Prostate gland (tissue), 2 donors: ENCODE measurements at regions of chr10 and their contacts with region 1.

Region 1: DNA sequence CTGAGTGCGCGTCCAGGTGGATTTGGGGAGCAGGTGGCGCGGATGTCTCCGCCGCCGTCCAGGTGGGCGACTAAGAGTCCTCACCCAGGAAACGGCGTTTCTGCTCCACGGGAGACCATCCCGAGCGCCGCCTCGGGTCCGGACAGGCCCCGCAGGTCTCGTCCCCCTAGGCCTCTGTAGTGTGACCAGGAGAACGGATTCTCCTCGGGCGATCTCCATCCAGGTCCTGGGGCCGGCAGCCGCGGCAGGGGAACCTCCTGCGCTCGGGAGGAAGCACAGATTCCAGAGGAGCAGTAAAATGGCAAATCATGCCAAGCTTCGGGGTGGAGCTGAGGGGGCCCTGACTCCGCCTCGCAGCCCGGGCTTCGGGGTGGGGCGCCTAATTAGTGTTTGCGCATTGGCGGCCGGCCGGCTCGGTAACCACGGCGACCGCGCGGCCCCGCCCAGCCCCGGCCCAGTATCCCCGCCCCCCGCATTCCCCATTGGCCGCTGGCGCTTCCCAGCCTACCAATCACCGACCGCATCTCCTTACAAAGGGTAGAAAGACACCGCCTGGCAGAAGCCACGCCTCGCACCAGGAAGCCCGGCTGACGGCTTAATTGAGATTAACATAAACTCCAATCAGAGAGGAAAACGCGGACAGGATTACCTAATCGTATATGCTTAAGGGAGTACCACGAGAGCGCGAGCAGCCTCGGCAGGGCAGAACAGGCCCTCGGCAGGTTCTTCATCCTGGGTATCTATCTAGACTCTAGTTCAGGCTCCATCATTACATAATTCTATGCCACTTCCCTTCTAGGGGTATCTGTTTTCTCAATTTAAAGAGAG is 168.6 kb downstream of the ARHGAP12 start:
- DNase-seq: peak; percentile 97
- H3K4me3 ChIP-seq: peak overlapping the region; percentile 56 to 80
- H3K27ac ChIP-seq: peak overlapping the region; percentile 91 to 92
- H3K4me1 ChIP-seq: peaks cover 2% of the 10 kb centered on the region
- H3K27me3 ChIP-seq: no peaks in the 10 kb centered on the region
- CTCF ChIP-seq: no peak
- POLR2A ChIP-seq: peak; percentile 91

Region 2: DNA sequence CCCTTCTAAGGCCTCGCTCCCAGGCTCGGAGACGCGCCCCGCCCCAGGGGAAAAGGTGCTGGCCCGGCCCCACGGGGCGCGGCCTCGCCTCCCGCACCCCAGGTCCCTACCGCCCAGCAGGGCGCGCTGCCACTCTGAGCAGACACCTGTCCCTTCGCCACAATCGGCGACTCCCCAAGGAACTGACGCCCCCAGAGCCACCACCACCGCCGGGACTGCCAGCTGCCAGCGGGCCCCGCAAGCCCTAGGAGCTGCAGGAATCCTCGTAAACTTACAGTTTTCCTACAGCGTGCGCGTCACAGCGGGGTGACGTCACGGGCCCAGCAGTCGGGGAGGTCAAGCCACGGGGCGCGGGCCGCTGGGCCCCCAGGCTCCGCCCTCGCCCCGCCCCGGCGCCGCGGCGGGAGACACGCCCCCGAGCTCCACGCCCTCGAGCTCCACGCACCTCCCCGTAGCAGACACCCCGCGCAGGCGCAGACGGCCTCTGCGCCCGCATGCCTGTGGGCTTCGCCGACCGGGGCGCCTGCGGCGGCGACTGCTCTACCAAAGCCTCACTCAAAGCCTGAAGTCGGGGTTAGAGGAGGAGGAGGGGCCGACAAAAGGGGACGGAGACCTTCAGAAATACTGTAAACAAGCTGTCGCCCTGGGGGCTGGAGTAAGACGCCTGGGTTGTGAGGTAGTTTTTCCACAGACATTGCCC is 728.3 kb before region 1 on chr10 and contains the start of gene ZNF438:
- intact Hi-C with region 1: loop called (anchors 2 kb)
- DNase-seq: peak; percentile 89
- H3K4me3 ChIP-seq: peak within 1 kb of the TSS; percentile 57 to 62
- H3K27ac ChIP-seq: peak within 1 kb of the TSS; percentile 97
- H3K4me1 ChIP-seq: no peaks in the 10 kb centered on the region
- H3K27me3 ChIP-seq: no peaks in the 10 kb centered on the region
- CTCF ChIP-seq: peak; percentile 31 to 80 (median 68)
- POLR2A ChIP-seq: peak; percentile 73
- total RNA-seq, gene ZNF438: 1.5 to 10.1 TPM

Region 3: DNA sequence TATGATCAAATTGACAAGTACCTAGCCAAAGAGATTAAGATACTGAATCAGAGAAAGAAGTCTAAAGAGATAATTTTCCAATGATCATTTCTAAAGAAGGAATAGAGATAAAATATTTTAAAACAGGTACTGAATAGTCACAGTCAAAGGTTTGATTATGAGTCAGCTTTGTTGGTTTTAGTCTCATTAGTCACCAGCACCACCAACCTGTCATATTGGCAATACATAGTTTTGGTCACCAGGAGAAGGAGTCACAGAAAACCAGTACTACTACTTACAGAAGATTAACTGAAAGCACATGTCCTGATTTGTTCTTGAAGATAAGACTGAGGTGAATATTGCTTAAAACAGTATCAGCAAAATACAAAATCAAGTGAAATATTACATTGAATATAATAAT is 406.4 kb before region 1 on chr10:
- intact Hi-C with region 1: no loop called
- DNase-seq: no peak
- H3K4me3 ChIP-seq: no peak overlapping the region
- H3K27ac ChIP-seq: no peak overlapping the region
- H3K4me1 ChIP-seq: no peaks in the 10 kb centered on the region
- H3K27me3 ChIP-seq: no peaks in the 10 kb centered on the region
- CTCF ChIP-seq: peak in 1 of 4 experiments; percentile 50
- POLR2A ChIP-seq: no peak

Region 4: DNA sequence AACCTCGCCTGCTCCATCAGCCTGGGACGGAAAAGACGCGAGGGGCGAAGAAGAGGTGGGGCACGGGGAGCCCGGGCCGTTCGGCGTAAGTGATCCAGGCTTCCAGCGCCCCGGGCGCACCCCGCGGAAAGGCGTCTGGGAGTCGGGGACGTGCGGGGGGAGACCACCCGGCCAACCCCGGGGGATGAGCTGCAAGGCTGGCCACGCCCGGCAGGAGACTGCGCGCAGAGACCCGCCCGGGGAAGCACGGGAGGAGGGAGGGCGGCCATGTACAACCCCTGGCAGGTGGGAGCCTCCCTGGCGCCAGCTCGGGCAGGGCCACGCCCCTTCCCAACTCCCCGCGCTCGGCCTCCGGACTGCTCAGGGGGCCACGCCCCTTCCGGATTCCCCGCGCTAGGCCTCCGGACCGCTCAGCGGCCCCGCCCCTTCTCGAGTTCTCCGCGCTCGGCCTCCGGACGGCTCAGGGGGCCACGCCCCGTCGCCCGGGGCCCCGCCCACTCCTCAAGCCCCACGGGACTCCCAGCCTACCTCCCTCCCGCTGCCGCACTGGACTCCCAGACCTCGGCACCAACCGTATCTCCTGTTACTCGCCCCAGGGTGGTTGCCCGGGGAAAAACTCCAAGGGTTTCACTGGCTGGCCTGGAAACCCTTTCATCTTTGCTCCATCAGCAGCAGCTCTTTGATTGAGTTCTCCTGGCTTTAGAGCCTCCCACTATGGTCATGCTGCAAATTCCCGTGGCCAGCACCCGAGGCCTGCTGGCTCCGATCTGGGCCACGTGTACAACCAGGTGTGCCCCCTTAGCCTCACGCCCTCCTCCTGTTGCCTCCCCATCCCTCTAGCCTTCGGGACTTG is 156.6 kb before region 1 on chr10:
- intact Hi-C with region 1: loop called (anchors 2 kb)
- DNase-seq: peak; percentile 95
- H3K4me3 ChIP-seq: peak overlapping the region; percentile 58 to 60
- H3K27ac ChIP-seq: peak overlapping the region; percentile 79 to 84
- H3K4me1 ChIP-seq: no peaks in the 10 kb centered on the region
- H3K27me3 ChIP-seq: no peaks in the 10 kb centered on the region
- CTCF ChIP-seq: peak in 2 of 4 experiments; percentile 26 to 39
- POLR2A ChIP-seq: peak; percentile 60

Region 5: GRCh38 chr10:31707093-31708039 is 52.6 kb before region 1 on chr10:
- intact Hi-C with region 1: loop called (anchors 5 kb)
- DNase-seq: no peak
- H3K4me3 ChIP-seq: no peak overlapping the region
- H3K27ac ChIP-seq: peak overlapping the region; percentile 39 to 44
- H3K4me1 ChIP-seq: no peaks in the 10 kb centered on the region
- H3K27me3 ChIP-seq: no peaks in the 10 kb centered on the region
- CTCF ChIP-seq: no peak
- POLR2A ChIP-seq: no peak